HepG2 (cell line): ENCODE measurements at regions of chr6 and their contacts with region 1.

Region 1: GRCh38 chr6:57097596-57097995 is 7.6 kb downstream of the ZNF451 start:
- DNase-seq: no peak
- ATAC-seq: no peak
- H3K4me3 ChIP-seq: no peak overlapping the region
- H3K27ac ChIP-seq: no peak overlapping the region
- H3K4me1 ChIP-seq: peaks cover 63% of the 10 kb centered on the region
- H3K27me3 ChIP-seq: no peaks in the 10 kb centered on the region
- CTCF ChIP-seq: no peak
- EP300 ChIP-seq: no peak
- POLR2A ChIP-seq: no peak
- RAD21 ChIP-seq: no peak

Region 2: GRCh38 chr6:57221936-57222742 is 124.5 kb after region 1 on chr6 and contains the start of gene RAB23:
- CTCF ChIA-PET with region 1: no interaction called
- POLR2A ChIA-PET with region 1: no interaction called
- in situ Hi-C with region 1: no loop called
- intact Hi-C with region 1: loop called (anchors 5 kb)
- DNase-seq: peak; percentile 75
- ATAC-seq: peak; percentile 92
- H3K4me3 ChIP-seq: peak within 1 kb of the TSS; percentile 88 to 95 (median 93)
- H3K27ac ChIP-seq: peak within 1 kb of the TSS; percentile 77
- H3K4me1 ChIP-seq: peaks cover 31% of the 10 kb centered on the region
- H3K27me3 ChIP-seq: no peaks in the 10 kb centered on the region; a peak in 1 of 5 replicates
- CTCF ChIP-seq: no peak
- EP300 ChIP-seq: no peak
- POLR2A ChIP-seq: peak; percentile 65 to 94
- RAD21 ChIP-seq: no peak
- total RNA-seq, gene RAB23: 16.4 and 24.2 TPM in 2 replicates